ENCODE measurements at regions of chrX and their contacts with region 1.

Region 1: DNA sequence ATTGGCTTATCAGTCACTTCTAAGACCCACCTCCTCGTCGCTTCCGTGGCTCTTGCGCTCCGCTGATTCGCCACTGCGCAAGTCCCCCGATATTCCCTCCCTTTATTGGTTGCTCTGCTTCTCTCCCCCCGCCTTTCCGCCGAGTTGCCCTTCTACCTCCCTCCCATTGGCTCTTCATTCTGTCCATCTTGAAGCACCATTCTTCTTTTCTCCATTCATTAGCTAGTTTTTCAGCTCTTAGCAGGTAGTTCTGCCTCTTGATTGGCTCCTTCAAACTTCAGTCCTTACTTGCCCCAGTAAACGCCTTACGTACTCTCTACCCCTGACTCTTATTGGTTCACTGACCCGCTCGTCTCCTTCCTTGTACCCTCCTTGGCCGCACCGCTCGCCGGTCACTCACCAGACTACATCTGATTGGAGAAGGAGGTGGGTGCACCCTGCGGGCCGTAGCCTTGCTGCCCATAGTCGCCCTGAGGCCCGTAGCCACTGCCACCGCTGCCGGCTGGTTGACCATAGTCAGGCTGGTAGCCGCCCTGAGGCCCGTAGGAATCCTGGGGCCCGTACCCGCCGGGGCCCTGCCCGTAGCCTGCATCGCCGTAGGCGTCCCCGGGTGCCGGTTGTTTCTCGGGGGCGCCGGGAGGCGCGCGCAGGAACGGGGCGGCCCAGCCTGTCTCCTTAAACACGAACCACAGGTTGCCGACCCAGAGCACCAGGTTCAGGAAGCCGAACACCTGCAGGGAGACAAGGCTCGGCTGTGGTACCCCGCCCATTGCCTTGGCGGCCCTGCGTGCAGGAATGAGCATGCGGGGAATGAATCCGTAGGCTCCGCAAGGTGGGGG is 5.1 kb upstream of the PRICKLE3 start:
- DNase-seq: peak; percentile 79 to 95
- H3K4me3 ChIP-seq: peak overlapping the region; percentile 57; the same call in 1 of the 2 replicates
- H3K27ac ChIP-seq: 0 out of 2 replicates have a peak overlapping the region, but pooled peaks have one; percentile 23
- H3K4me1 ChIP-seq: no peaks in the 10 kb centered on the region
- H3K27me3 ChIP-seq: no peaks in the 10 kb centered on the region
- CTCF ChIP-seq: no peak

Region 2: DNA sequence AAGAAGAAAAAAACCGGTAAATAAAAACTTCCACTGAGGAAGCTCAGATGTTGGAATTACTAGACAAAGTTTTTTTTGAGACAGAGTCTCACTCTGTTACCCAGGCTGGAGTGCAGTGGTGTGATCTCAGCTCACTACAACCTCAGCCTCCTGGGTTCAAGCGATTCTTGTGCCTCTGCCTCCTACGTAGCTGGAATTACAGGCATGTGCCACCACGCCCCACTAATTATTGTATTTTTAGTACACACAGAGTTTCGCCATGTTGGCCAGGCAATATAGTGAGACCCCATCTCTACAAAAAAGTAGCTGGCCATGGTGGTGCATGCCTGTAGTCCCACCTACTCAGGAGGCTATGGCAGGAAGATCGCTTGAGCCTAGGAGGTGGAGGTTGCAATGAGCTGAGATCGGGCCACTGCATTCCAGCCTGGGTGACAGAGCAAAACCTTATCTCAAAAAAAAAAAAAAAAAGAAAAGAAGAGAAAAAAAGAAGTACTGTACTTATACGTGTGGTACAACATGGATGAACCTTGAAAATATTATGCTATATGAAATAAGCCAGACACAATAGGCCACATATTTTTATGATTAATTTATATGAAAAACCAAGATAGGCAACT is 101.8 kb before region 1 on chrX:
- CTCF ChIA-PET with region 1: no interaction called
- POLR2A ChIA-PET with region 1: no interaction called
- intact Hi-C with region 1: no loop called
- DNase-seq: no peak
- H3K4me3 ChIP-seq: no peak overlapping the region
- H3K27ac ChIP-seq: no peak overlapping the region
- H3K4me1 ChIP-seq: no peaks in the 10 kb centered on the region
- H3K27me3 ChIP-seq: no peaks in the 10 kb centered on the region
- CTCF ChIP-seq: no peak

Region 3: DNA sequence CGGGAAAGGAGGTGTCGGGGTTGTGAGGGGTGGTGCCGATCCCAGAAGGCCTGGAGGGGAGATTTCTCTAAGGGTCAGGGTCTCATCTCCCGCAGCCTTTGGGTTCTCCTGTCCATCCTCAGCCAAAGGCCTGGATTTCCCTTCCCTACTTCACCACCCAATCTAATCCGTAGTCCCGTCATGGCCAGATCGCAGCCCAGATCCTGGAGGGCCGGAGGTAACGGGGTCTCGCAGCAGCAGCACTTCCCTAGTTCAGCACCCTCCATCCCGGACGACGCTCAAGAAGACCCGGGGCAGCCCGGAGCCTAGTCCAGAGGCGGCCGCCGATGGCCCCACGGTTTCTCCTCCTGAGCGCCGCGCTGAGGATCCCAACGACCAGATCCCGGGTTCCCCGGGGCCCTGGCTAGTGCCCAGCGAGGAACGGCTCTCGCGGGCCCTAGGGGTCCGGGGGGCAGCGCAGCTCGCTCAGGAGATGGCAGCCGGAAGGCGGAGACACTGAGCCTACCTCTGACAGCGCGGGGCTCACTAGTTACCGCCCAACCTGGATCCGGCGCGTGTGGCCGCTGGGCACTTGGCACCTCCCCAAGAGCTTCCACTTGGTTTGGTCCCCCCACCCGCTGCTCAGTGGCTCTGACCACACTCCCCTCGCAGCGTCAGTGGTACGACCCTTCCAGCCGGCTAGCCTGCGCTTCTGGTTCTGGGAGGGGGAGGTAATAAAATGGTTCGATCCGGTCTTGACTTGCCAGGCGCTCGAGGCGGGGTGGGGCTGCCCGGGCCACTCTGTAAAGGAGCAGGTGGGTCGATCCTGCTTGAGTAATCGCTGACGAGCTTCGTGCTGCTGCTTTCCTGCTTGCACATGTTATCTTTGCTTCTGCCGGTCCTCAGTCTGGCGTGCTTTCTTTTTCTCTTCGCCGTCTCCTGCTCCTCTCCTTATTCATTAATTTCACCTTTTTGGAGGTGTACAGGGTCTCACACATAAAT is 25.1 kb before region 1 on chrX:
- CTCF ChIA-PET with region 1: interaction called, 3 read pairs
- POLR2A ChIA-PET with region 1: interaction called, 12 read pairs
- intact Hi-C with region 1: no loop called
- DNase-seq: no peak
- H3K4me3 ChIP-seq: no peak overlapping the region
- H3K27ac ChIP-seq: no peak overlapping the region
- H3K4me1 ChIP-seq: no peaks in the 10 kb centered on the region
- H3K27me3 ChIP-seq: no peaks in the 10 kb centered on the region
- CTCF ChIP-seq: no peak

Region 4: DNA sequence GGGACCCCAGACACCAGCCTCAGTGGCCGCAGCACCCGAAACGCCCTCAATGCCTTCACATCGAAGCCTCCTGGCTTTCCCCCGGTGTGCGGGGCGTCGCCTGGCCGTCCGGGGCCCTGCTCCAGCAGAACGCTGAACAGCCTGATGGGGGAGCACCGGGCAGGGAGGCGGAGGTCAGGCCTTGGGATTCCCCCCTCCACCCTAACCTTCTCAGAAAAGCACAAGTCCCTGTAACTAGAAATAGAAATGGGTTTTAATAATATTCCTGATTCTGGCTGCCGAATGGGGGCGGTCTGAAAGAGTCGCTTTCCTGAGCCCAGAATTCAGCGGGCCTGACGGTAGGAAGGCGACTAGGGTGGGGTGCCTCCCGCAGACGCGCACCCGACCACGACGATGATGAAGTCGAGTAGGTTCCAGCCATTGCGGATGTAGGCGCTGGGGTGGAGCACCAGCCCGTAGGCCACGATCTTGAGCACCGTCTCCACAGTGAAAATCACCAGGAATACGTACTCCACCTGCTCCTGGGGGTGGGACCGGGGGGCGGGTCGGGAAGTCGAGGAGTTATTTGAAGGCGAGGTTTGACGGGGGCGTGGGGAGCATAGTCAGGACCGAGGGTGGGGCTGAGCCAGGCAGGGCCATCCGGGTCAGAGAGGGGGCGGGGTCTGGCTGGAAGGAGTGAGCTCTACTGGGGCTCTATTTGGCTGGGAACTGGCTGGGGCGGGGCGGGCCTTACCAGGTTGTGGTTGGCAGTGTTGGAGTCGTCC is 39.4 kb after region 1 on chrX:
- CTCF ChIA-PET with region 1: no interaction called
- POLR2A ChIA-PET with region 1: interaction called, 11 read pairs
- intact Hi-C with region 1: no loop called
- DNase-seq: peak; percentile 36 to 50
- H3K4me3 ChIP-seq: peak overlapping the region; percentile 48; the same call in 1 of the 2 replicates
- H3K27ac ChIP-seq: no peak overlapping the region
- H3K4me1 ChIP-seq: no peaks in the 10 kb centered on the region
- H3K27me3 ChIP-seq: no peaks in the 10 kb centered on the region
- CTCF ChIP-seq: peak; percentile 19; the same call in 1 of the 2 replicates

Region 5: DNA sequence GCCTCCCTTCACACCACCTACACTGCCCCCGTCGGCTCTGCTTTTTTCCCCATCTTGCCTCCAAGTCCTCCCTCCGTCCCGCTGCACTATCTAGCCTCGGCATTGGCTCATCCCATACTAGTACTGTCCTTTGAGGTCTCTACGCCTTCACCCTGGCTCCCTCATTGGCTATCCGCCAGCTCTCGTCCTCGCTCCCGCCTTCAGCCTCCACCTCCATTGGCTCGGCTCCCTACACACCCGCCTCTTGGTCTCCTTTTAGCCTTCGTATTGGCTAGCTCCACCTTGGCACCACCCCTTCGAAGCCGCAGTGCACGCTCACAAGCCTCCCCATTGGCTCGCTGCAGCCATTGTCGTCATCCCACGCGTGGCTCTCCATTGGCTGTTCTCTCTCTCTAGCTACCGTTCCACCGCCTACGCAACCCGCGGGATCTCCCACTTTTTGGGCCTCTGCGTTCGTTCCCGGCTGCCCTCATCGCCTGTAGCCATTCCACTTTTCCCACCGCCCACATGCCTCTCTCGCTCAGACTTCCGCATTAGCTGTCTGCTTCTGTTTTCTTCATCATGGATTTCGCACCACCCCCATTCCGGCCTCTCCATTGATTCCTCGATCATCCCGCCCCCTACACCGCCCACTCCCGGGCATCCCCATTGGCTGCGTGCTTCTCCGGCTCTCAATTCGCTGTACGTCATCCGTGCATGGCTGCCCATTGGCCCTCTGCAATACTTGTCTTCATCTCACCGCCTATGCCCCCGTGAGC is 77.9 kb after region 1 on chrX:
- CTCF ChIA-PET with region 1: no interaction called
- POLR2A ChIA-PET with region 1: interaction called, 14 read pairs
- intact Hi-C with region 1: loop called (anchors 2 kb)
- DNase-seq: peak; percentile 85 to 86
- H3K4me3 ChIP-seq: peak overlapping the region; percentile 58
- H3K27ac ChIP-seq: peak overlapping the region; percentile 37; the same call in 1 of the 2 replicates
- H3K4me1 ChIP-seq: peaks cover 6% of the 10 kb centered on the region; the same call in 1 of the 2 replicates
- H3K27me3 ChIP-seq: no peaks in the 10 kb centered on the region
- CTCF ChIP-seq: no peak